Activated naive CD4-positive, alpha-beta T cell treated with anti-CD3 and anti-CD28 coated beads, Interleukin-2, amount 10 ng/mL, durations not matched to agents 7 days and 5 days (primary cell): ENCODE measurements at regions of chr18 and their contacts with region 1.

Region 1: GRCh38 chr18:50356036-50356945 is 18.6 kb upstream of the SKA1 start:
- DNase-seq: no peak
- H3K4me3 Mint-ChIP-seq: no peak overlapping the region
- H3K27ac Mint-ChIP-seq: no peak overlapping the region
- H3K4me1 Mint-ChIP-seq: peaks cover 13% of the 10 kb centered on the region
- H3K27me3 Mint-ChIP-seq: peaks cover 29% of the 10 kb centered on the region

Region 2: DNA sequence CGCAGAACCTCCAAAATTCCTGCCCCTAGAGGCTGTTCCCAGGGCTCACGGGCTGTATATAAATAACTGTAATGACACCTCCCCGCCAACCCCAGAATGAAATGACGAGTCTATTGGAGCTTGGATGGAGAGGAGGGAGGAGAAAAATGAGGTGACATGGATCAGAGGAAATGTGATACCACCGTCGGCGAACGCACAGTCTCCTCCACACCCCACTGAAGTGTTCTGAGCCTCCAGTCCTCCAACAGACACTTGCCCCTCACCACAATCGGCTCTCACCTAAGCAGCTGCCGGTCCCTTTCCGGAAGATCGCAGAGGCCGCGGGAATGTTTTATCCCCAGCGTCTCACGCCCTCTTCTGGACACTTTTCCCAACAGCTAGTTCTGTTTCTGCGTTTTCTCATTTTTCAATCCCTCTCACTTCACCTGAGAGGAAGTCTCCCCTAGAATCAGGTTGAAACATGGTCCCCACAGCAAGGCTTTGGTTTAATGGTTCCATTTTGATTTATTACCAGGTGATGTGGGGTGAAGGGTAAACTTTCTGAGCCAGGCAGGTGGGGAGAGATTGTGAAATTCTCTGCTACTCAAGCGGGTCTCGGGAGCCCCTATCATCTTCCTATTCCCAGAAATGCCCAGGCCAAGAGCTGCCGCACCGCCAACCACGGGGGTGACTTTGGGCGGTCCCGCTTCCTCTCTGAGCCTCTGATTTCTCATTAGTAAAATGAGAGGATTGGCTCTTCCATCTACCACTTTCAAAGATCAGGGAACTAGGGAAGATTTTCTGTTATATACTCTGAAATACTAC is 152.3 kb before region 1 on chr18:
- CTCF ChIA-PET with region 1: interaction called, 18 read pairs
- DNase-seq: peak; percentile 36
- H3K4me3 Mint-ChIP-seq: no peak overlapping the region
- H3K27ac Mint-ChIP-seq: no peak overlapping the region
- H3K4me1 Mint-ChIP-seq: peaks cover 2% of the 10 kb centered on the region
- H3K27me3 Mint-ChIP-seq: peaks cover 61% of the 10 kb centered on the region

Region 3: DNA sequence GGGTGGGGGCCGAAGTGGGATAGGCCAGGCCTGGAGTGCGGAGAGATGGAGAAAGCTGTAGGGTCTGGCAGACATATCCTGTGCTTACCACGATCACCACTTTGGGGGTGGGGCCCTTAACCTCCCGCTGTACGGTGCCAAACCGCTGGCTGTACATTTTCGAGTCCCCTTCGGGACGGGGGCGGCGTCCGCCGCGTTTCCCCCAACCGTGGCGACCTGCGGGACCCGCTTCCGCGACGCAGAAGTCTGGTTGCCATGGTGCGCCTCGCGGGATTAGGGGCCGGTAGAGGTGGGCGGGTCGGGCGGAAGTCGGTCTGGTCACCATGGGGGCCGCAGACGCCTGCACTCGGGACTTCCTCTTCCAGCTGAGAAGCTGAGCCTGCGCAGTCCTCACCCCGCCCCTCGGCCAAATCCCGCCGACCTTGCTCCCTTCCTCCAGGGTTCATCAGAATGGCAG is 90.0 kb before region 1 on chr18 and contains the start of gene CFAP53:
- CTCF ChIA-PET with region 1: interaction called, 13 read pairs
- DNase-seq: peak; percentile 92
- H3K4me3 Mint-ChIP-seq: peak within 1 kb of the TSS; percentile 77
- H3K27ac Mint-ChIP-seq: peak within 1 kb of the TSS; percentile 20
- H3K4me1 Mint-ChIP-seq: peaks cover 29% of the 10 kb centered on the region
- H3K27me3 Mint-ChIP-seq: peaks cover 4% of the 10 kb centered on the region

Region 4: DNA sequence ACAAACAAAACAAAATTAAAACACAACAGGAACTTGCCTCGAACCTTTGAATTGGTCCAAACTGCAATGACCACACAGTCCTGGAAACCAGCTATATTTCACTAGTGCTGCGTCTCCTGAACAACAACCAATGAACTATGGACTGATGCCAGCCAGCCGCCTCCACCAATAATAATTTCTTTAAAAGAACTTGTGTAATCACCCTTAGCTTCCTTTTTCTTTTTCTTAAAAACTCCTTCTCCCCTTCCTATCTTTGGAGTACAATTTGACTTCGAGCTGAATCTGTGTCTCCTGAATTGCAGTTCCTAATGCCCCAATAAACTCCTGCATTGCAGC is 67.2 kb before region 1 on chr18:
- CTCF ChIA-PET with region 1: interaction called, 11 read pairs
- DNase-seq: no peak
- H3K4me3 Mint-ChIP-seq: peak overlapping the region; percentile 68
- H3K27ac Mint-ChIP-seq: peak overlapping the region; percentile 72
- H3K4me1 Mint-ChIP-seq: peaks cover 30% of the 10 kb centered on the region
- H3K27me3 Mint-ChIP-seq: peaks cover 3% of the 10 kb centered on the region

Region 5: GRCh38 chr18:50374753-50375391 is 18.6 kb after region 1 on chr18 and contains the start of gene SKA1:
- CTCF ChIA-PET with region 1: interaction called, 11 read pairs
- DNase-seq: peak; percentile 93
- H3K4me3 Mint-ChIP-seq: peak within 1 kb of the TSS; percentile 86
- H3K27ac Mint-ChIP-seq: peak within 1 kb of the TSS; percentile 88
- H3K4me1 Mint-ChIP-seq: peaks cover 36% of the 10 kb centered on the region
- H3K27me3 Mint-ChIP-seq: peaks cover 13% of the 10 kb centered on the region